ENCODE measurements at regions of chr10 and their contacts with region 1.

Region 1: DNA sequence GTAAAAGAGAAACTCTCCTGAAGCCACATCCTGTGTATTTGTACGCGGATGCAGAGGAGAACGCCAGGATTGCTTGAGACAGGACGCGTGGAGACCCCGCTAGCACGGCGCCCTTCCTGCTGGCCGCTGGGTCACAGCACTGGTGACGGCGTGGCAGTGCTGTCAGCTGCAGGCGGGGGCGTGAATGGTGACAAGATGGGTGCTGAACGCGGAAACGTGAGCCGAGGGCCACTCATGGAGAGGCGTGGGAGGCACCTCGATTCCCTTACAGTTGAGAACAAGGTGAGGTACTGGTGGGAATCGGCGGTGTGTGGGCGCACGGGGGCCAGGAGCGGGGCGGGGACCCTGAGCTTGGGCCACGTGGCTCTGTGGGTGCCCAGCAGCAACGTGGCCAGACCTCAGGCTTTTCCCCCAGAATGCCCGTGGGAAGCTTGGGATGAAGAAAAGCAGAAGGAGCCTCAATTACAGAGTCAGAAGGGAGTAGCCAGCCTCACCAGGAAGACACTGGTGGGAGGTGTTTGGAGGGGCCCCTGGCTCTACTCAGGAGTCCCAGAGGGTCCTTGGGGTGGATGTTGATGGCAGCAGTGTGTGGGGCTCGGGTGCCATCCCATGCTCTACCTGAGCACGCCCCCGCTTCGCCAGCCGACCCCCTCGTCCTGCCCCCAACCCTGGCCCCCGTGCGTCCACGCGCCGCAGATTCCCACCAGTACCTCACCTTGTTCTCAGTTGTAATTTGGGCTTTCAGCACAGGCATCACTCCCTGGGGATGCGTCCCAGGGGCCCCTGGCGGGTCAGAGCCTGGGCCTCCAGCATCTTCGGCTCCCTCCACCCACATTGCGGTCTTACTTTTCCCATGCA is 208.4 kb upstream of the TCERG1L start:
- DNase-seq: no peak
- H3K4me3 ChIP-seq: no peak overlapping the region
- H3K27ac ChIP-seq: no peak overlapping the region
- H3K4me1 ChIP-seq: no peaks in the 10 kb centered on the region
- H3K27me3 ChIP-seq: no peaks in the 10 kb centered on the region
- CTCF ChIP-seq: no peak
- EP300 ChIP-seq: no peak
- POLR2A ChIP-seq: no peak

Region 2: DNA sequence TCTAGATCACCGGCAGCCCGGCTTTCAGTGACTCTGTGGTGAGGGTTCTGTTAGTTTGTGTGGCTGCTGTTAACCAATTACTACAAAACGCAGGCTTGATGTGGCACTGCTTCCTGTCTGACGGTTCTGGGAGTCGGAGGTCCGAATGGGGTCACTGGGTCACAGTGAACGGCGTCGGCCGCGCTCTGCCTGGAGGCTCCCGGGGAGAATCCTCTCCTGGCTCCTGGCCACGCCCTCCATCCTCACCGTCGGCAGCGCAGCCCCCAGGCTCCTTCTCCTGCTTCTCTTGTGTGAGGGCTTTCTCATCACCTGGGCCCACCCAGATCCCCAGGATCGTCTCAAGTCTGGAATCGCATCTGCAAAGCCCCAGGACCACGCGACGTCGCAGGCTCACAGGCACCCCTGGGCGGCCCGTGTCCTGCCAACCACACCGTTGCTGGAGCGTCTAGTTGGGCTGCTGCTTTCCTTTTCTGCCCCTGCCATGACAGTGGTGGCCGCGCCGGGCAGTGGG is 1297.8 kb after region 1 on chr10:
- in situ Hi-C with region 1: no loop called
- intact Hi-C with region 1: loop called (anchors 5 kb)
- DNase-seq: no peak
- H3K4me3 ChIP-seq: no peak overlapping the region
- H3K27ac ChIP-seq: no peak overlapping the region
- H3K4me1 ChIP-seq: no peaks in the 10 kb centered on the region
- H3K27me3 ChIP-seq: peaks cover 15% of the 10 kb centered on the region
- CTCF ChIP-seq: no peak
- EP300 ChIP-seq: no peak
- POLR2A ChIP-seq: no peak

Measured in transverse colon (tissue), 4 donors.